H1 (cell line): ENCODE measurements at regions of chr5 and their contacts with region 1.

Region 1: DNA sequence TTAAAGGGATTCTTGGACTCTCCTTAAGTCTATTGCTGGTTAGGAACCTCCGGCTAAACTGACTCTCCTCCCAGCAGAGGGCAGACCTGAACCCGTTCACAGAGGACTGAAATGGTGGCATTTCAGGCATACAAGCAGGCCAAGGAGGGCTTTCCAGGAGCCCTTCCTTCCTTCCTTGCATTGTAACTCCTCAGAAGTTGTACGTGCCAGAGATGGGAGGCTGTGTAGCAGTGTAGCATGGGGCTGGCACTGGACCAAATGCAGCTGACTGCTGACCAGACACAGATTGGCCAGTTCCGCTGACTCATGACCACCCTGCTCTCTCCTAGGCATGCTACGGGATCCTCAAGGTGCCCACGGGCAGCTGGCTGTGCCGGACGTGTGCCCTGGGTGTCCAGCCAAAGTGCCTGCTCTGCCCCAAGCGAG is 36.4 kb downstream of the JADE2 start:
- DNase-seq: no peak
- H3K4me3 ChIP-seq: no peak overlapping the region
- H3K27ac ChIP-seq: no peak overlapping the region
- H3K4me1 ChIP-seq: no peaks in the 10 kb centered on the region
- H3K27me3 ChIP-seq: no peaks in the 10 kb centered on the region
- CTCF ChIP-seq: peak in 2 of 3 experiments; percentile 59 to 67; a peak in 3 of 4 replicates
- EP300 ChIP-seq: no peak
- POLR2A ChIP-seq: no peak
- RAD21 ChIP-seq: peak; percentile 46 to 69

Region 2: DNA sequence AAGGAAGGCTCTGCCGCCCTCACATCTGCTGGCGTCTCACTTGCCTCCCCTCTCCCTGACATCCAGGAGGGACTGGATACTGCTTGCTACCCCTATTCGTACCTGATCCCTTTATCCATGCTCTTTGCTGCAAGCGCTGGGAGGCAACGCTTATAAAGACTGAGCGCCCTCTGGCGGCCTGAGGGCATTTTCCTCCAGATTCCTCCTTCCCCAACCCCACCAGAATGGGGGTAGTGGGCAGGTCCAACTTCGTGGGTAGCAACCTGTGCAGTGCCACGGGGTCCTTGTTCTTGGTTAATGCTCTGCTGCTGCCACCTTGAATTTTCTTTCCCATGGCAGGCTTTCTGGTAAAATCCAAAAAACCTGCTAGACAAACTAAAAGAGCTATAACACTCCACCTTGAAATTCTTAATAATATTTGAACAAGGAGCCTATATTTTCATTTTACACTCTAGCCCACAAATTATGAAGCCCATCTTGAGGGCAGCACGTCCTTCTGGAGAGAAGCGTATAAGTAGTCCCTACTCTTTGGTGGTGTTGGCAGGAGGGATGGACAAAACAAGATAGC is 16.0 kb after region 1 on chr5:
- CTCF ChIA-PET with region 1: interaction called, 97 read pairs
- POLR2A ChIA-PET with region 1: interaction called, 6 read pairs
- DNase-seq: peak; percentile 69 to 94
- H3K4me3 ChIP-seq: no peak overlapping the region
- H3K27ac ChIP-seq: no peak overlapping the region
- H3K4me1 ChIP-seq: no peaks in the 10 kb centered on the region; a peak in 1 of 7 replicates
- H3K27me3 ChIP-seq: no peaks in the 10 kb centered on the region
- CTCF ChIP-seq: peak in 2 of 3 experiments; percentile 93 to 98; a peak in 3 of 4 replicates
- EP300 ChIP-seq: no peak
- POLR2A ChIP-seq: no peak
- RAD21 ChIP-seq: peak; percentile 92 to 93